Gastrocnemius medialis (tissue), 4 donors: ENCODE measurements at regions of chr12 and their contacts with region 1.

Region 1: GRCh38 chr12:118494789-118495188 is 118.4 kb downstream of the SUDS3 start:
- DNase-seq: no peak
- ATAC-seq: no peak
- H3K4me3 ChIP-seq: no peak overlapping the region
- H3K27ac ChIP-seq: no peak overlapping the region
- H3K4me1 ChIP-seq: peaks cover 6 to 9% of the 10 kb centered on the region in 2 donors
- H3K27me3 ChIP-seq: no peaks in the 10 kb centered on the region
- CTCF ChIP-seq: no peak
- POLR2A ChIP-seq: no peak

Region 2: GRCh38 chr12:118544569-118544968 is 49.8 kb after region 1 on chr12:
- in situ Hi-C with region 1: no loop called
- intact Hi-C with region 1: no loop called
- DNase-seq: no peak
- ATAC-seq: peak; percentile 75 to 79
- H3K4me3 ChIP-seq: no peak overlapping the region
- H3K27ac ChIP-seq: peak overlapping the region in 3 of 4 donors; percentile 14 to 49 (median 44)
- H3K4me1 ChIP-seq: no peaks in the 10 kb centered on the region
- H3K27me3 ChIP-seq: no peaks in the 10 kb centered on the region
- CTCF ChIP-seq: no peak
- POLR2A ChIP-seq: no peak

Region 3: GRCh38 chr12:118625050-118625675 is 130.4 kb after region 1 on chr12:
- in situ Hi-C with region 1: no loop called
- intact Hi-C with region 1: loop called (anchors 5 kb)
- DNase-seq: no peak
- ATAC-seq: no peak
- H3K4me3 ChIP-seq: no peak overlapping the region
- H3K27ac ChIP-seq: no peak overlapping the region
- H3K4me1 ChIP-seq: no peaks in the 10 kb centered on the region
- H3K27me3 ChIP-seq: no peaks in the 10 kb centered on the region
- CTCF ChIP-seq: no peak
- POLR2A ChIP-seq: no peak